Activated T-helper 1 cell treated with anti-CD3 and anti-CD28 coated beads, Interleukin-12 subunit alpha, Interleukin-12 subunit beta, Interleukin-2, Interleukin-4 antibody, amounts not matched to agents 30 ng/mL and 10 ng/mL and 1 ng/mL, durations not matched to agents 14 hours and 24 hours and 36 hours (primary cell): ENCODE measurements at regions of chr12 and their contacts with region 1.

Region 1: GRCh38 chr12:4143896-4144295 is 129.7 kb upstream of the CCND2 start:
- DNase-seq: no peak
- H3K4me3 Mint-ChIP-seq: peak overlapping the region; percentile 23
- H3K27ac Mint-ChIP-seq: peak overlapping the region; percentile 68
- H3K4me1 Mint-ChIP-seq: peaks cover 97% of the 10 kb centered on the region
- H3K27me3 Mint-ChIP-seq: no peaks in the 10 kb centered on the region

Region 2: GRCh38 chr12:3973978-3974644 is 169.8 kb before region 1 on chr12:
- intact Hi-C with region 1: loop called (anchors 1 kb)
- DNase-seq: no peak
- H3K4me3 Mint-ChIP-seq: peak overlapping the region; percentile 49
- H3K27ac Mint-ChIP-seq: peak overlapping the region; percentile 56
- H3K4me1 Mint-ChIP-seq: peaks cover 56% of the 10 kb centered on the region
- H3K27me3 Mint-ChIP-seq: no peaks in the 10 kb centered on the region

Region 3: GRCh38 chr12:4112734-4113325 is 31.1 kb before region 1 on chr12:
- intact Hi-C with region 1: loop called (anchors 1 kb)
- DNase-seq: no peak
- H3K4me3 Mint-ChIP-seq: no peak overlapping the region
- H3K27ac Mint-ChIP-seq: peak overlapping the region; percentile 50
- H3K4me1 Mint-ChIP-seq: peaks cover 83% of the 10 kb centered on the region
- H3K27me3 Mint-ChIP-seq: no peaks in the 10 kb centered on the region

Region 4: DNA sequence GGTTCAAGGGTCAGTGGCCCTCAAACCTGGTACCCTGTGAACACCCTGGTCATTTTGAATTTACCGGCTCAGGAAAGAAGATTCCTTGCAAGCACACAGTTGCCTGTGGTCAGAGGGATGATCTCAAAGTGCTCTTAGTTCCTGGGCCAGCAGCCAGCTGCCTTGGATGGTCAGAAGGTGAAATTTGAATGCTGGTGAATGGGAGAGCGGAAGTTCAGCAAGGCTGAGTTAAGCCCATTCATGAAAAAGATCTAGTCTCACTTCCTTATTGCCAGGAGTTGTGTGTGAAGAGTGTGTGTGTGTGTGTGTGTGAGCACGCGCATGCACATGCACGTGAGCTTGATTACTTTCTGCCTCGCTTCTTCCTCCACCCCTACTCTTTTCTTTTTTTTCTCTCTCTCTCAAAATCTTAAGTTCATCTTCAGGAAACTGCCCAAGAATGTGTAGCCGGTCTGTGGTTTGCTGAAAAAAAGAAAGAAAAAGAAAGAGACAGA is 25.8 kb before region 1 on chr12:
- intact Hi-C with region 1: loop called (anchors 1 kb)
- DNase-seq: no peak
- H3K4me3 Mint-ChIP-seq: peak overlapping the region; percentile 67
- H3K27ac Mint-ChIP-seq: peak overlapping the region; percentile 81
- H3K4me1 Mint-ChIP-seq: peaks cover 80% of the 10 kb centered on the region
- H3K27me3 Mint-ChIP-seq: no peaks in the 10 kb centered on the region

Region 5: GRCh38 chr12:4164559-4165558 is 21.0 kb after region 1 on chr12:
- intact Hi-C with region 1: loop called (anchors 1 kb)
- DNase-seq: peak; percentile 67
- H3K4me3 Mint-ChIP-seq: peak overlapping the region; percentile 88
- H3K27ac Mint-ChIP-seq: peak overlapping the region; percentile 99
- H3K4me1 Mint-ChIP-seq: peaks cover 68% of the 10 kb centered on the region
- H3K27me3 Mint-ChIP-seq: no peaks in the 10 kb centered on the region

Region 6: GRCh38 chr12:4169959-4170358 is 26.1 kb after region 1 on chr12:
- intact Hi-C with region 1: loop called (anchors 1 kb)
- DNase-seq: no peak
- H3K4me3 Mint-ChIP-seq: peak overlapping the region; percentile 9
- H3K27ac Mint-ChIP-seq: peak overlapping the region; percentile 46
- H3K4me1 Mint-ChIP-seq: peaks cover 52% of the 10 kb centered on the region
- H3K27me3 Mint-ChIP-seq: no peaks in the 10 kb centered on the region

Region 7: GRCh38 chr12:4745249-4745648 is 601.4 kb after region 1 on chr12:
- intact Hi-C with region 1: no loop called
- DNase-seq: no peak
- H3K4me3 Mint-ChIP-seq: no peak overlapping the region
- H3K27ac Mint-ChIP-seq: no peak overlapping the region
- H3K4me1 Mint-ChIP-seq: no peaks in the 10 kb centered on the region
- H3K27me3 Mint-ChIP-seq: peaks cover 8% of the 10 kb centered on the region